ENCODE measurements at regions of chr1 and their contacts with region 1.

Region 1: DNA sequence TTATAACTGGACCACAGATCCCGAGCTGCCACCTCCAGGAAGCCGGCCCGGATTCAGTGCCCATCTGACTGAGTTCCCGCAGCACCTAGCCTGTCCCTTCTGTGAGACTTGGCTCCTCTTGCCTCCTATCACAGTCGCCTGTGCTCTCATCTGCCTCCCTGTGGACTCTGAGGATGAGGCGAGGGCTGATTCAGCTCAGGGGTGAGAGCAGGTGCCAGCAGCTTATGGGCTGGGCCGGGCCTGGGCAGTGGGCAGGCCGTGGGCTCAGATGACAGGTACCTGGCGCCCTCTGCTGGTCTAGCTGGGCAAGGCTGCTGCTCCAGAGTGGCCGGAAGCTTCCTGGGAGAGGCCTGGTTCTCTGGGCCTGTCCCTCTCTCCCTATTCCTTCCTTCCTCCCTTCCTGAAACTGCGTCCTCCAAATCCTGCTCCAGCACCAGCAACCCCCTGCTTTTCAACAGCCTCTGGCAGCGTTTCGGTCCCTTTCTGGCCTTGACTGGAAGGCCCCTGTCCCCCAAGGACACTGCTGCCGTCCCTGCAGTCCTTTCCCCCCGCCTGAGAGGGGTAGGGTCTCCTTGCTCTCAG is 17.3 kb upstream of the PCSK9 start:
- DNase-seq: peak; percentile 74
- H3K4me3 ChIP-seq: no peak overlapping the region
- H3K27ac ChIP-seq: no peak overlapping the region
- H3K27me3 ChIP-seq: peaks cover 30% of the 10 kb centered on the region
- CTCF ChIP-seq: peak; percentile 94

Region 2: DNA sequence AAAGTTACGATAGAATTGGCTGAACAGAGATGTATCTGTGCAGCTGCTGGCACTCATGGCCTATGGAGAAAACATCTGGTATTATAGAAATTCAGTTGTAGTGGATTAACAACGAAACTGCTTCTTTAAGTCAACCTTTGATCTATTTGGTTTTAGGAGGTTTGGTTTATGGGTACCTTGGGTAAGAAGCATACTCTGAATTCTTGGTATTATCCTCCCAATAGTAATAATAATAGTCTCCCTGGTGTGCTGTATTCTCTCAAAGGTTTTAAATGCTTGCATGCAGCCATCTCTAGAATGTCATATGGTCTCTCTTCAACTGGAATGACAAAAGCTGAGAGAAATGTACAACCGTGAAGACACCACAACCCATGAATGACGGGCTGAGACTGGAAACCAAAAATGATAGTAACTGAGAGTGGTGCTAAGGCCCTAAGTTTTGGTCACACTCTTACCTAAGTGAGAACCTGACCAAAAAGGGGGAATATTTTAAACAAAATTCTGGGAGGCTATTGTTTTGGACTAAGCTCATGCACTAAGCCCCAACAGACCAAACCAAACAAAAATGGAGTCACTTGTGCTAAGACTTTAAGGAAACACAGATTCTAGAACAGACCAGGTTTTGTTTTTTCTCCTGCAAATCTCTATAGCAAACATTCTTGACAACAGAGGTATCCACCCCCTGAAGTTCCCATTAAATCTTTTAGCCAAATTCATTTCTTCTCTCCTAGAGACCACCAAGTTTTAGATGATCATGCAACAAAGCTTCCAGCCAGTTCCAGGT is 59.3 kb before region 1 on chr1:
- CTCF ChIA-PET with region 1: interaction called, 14 read pairs
- POLR2A ChIA-PET with region 1: no interaction called
- DNase-seq: no peak
- H3K4me3 ChIP-seq: no peak overlapping the region
- H3K27ac ChIP-seq: no peak overlapping the region
- H3K27me3 ChIP-seq: no peaks in the 10 kb centered on the region
- CTCF ChIP-seq: no peak

Region 3: DNA sequence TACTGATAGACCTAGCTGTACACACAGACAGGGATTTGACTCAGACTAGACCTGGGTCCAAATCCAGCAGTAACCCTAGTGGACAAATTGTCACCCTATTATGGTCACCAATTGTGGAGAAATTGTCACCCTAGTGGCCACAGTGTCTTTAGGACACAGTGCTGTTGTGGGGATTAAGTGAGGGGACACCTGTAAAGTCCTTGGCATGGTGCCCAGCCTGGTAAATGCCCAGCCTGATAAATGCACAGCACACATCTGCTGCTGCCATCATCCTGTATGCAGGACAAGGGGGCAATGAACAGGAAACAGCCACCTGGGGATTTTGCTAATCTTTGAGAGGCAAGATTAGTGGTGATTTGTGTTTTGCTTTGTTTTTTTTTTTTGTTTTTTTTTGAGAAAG is 39.3 kb before region 1 on chr1:
- CTCF ChIA-PET with region 1: interaction called, 12 read pairs
- POLR2A ChIA-PET with region 1: no interaction called
- DNase-seq: no peak
- H3K4me3 ChIP-seq: no peak overlapping the region
- H3K27ac ChIP-seq: no peak overlapping the region
- H3K27me3 ChIP-seq: peaks cover 59% of the 10 kb centered on the region
- CTCF ChIP-seq: no peak

Region 4: DNA sequence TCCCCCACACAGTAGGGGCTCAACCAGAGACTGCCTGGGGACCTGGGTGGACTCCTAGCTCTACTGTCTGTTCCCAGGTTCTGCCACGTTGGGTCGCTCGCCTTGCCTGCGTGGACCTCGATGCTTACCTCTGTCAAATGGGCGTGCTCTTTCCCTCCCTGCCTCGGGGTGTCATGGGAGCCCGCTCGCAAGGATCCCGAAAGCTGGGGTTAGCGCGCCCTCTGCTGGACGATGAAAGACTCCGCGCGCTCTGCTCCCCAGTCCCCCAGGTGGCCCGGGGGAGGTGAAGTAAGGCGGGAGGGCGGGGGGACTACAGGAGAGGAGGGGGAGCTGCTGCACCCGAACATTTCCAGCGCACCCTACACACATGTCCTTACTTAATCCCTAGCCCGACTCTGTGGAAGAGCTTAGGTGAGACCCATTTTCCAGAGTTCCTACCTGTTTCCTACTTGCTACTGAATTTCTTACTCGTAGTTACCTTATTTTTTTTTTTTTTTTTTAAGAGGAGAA is 25.6 kb before region 1 on chr1:
- CTCF ChIA-PET with region 1: interaction called, 17 read pairs
- POLR2A ChIA-PET with region 1: no interaction called
- DNase-seq: no peak
- H3K4me3 ChIP-seq: no peak overlapping the region
- H3K27ac ChIP-seq: no peak overlapping the region
- H3K27me3 ChIP-seq: peaks cover 60% of the 10 kb centered on the region
- CTCF ChIP-seq: peak; percentile 75

Region 5: GRCh38 chr1:55034476-55035133 is 12.5 kb after region 1 on chr1:
- CTCF ChIA-PET with region 1: interaction called, 30 read pairs
- POLR2A ChIA-PET with region 1: no interaction called
- DNase-seq: no peak
- H3K4me3 ChIP-seq: no peak overlapping the region
- H3K27ac ChIP-seq: no peak overlapping the region
- H3K27me3 ChIP-seq: peaks cover 57% of the 10 kb centered on the region
- CTCF ChIP-seq: no peak

Region 6: DNA sequence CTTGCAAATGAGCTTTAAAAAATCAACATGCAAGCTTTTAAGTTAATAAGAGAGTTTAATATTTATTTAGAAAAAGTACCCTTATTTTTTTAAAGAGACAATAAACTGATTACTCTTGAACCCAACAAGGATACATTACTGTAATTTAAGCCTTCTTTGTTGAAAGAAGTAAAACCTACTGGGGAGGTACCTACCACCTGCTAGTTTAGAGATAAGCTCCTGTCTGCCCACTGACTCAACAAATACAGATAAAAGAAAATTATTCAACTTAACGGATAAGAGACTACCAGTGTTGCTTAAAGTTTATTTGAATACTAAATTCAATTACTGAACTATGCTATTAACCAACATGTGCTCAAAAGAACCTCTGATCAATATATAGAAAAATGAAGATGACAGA is 170.0 kb after region 1 on chr1:
- CTCF ChIA-PET with region 1: no interaction called
- POLR2A ChIA-PET with region 1: no interaction called
- DNase-seq: no peak
- H3K4me3 ChIP-seq: no peak overlapping the region
- H3K27ac ChIP-seq: no peak overlapping the region
- H3K27me3 ChIP-seq: no peaks in the 10 kb centered on the region
- CTCF ChIP-seq: no peak